ENCODE measurements at regions of chr18 and their contacts with region 1.

Region 1: DNA sequence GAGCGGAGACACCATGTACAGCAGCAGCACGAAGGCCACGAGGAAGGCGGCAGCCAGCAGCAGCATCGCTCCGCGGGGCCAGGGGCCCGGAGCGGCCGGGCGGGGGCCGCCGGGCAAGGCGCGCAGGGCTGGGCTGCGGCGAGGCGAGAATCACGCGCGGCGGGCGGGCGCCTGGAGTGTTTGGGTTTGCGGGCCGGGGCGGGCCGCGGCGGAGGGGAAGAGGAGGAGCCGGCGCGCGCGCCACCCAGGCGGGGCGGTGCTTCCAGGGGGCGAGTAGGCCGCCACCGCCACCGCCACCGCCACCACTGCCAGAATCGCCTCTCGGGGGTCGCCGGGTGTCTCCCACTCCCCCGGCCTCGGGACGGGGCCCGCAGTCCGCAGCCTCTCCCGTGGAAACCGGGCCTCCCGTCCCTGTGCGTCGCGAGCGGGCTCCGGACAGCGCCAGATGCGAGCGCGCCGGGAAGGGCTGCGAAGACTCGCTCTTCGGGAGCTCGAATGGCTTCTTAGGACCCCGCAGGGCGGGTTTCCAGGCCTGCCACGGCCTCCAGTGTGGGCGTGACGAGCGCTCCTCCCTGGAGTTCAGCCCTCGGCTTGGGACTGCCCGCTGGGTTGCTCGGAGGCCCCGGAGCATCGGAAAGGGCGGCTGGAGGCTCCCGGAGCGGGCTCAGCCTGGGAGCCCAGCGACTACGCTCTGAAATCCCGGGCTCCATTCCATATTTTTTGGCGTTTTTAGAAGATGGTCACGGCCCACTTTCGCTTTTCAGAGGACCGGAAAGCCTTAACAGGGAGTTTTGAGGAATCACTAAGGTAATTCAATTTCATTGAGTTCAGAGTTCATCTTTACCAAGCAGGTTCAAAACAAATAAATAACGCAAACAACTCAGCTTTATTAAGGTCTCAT is at the start of gene KDSR:
- DNase-seq: peak; percentile 98
- H3K4me3 Mint-ChIP-seq: peak within 1 kb of the TSS; percentile 97
- H3K27ac Mint-ChIP-seq: peak within 1 kb of the TSS; percentile 78
- H3K4me1 Mint-ChIP-seq: peaks cover 24% of the 10 kb centered on the region
- H3K27me3 Mint-ChIP-seq: no peaks in the 10 kb centered on the region
- CTCF ChIP-seq: no peak
- total RNA-seq, gene KDSR: 97.4 and 108 TPM in 2 replicates

Region 2: DNA sequence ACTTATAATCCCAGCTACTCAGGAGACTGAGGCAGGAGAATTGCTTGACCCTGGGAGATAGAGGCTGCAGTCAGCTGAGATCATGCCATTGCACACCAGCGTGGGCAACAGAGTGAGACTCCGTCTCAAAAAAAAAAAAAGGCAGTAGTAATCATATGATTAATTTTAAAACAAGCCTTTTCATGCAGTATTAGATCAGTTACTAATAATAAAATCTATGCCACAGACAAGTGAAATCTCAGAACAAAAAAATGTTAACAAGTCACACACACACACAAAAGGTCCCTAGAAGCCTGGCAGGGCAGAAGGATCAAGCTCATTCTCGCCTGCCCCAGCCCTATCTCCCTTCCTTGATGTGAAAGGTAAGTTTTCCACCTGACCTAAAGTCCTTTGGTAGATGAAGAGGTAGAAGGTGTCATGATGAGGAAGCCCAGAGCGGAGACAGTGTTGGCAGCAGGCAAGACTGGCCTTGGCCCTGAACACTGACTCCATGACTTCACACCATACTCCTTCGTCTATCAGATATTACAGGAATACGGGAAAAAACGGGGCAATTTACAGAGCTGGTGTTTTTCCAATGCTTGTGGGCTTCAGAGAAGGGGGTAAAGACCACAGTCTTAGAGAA is 10.9 kb before region 1 on chr18:
- CTCF ChIA-PET with region 1: interaction called, 3 read pairs
- POLR2A ChIA-PET with region 1: interaction called, 32 read pairs
- intact Hi-C with region 1: no loop called
- DNase-seq: no peak
- H3K4me3 Mint-ChIP-seq: no peak overlapping the region
- H3K27ac Mint-ChIP-seq: no peak overlapping the region
- H3K4me1 Mint-ChIP-seq: no peaks in the 10 kb centered on the region
- H3K27me3 Mint-ChIP-seq: no peaks in the 10 kb centered on the region
- CTCF ChIP-seq: no peak

Region 3: DNA sequence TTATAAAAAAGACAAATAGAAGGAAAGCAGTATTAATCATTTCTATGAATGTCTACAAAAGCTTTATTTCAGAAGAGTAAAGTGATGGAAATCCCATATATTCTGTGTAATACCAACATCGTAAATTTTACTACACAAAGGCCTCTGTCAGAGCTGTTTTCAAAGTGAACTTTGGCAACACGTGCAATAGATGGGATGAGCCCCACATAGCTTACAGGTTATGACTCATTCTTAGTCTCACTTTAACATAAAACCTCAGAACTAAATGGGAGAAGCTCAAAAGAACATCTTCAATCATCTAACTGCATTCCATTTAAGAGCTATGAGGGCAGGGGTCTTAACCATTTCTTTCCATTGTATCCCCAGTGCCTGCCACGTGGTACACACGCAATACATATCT is 43.5 kb after region 1 on chr18:
- CTCF ChIA-PET with region 1: no interaction called
- POLR2A ChIA-PET with region 1: interaction called, 29 read pairs
- intact Hi-C with region 1: no loop called
- DNase-seq: peak; percentile 74
- H3K4me3 Mint-ChIP-seq: no peak overlapping the region
- H3K27ac Mint-ChIP-seq: peak overlapping the region; percentile 57
- H3K4me1 Mint-ChIP-seq: peaks cover 25% of the 10 kb centered on the region
- H3K27me3 Mint-ChIP-seq: no peaks in the 10 kb centered on the region
- CTCF ChIP-seq: no peak

Region 4: DNA sequence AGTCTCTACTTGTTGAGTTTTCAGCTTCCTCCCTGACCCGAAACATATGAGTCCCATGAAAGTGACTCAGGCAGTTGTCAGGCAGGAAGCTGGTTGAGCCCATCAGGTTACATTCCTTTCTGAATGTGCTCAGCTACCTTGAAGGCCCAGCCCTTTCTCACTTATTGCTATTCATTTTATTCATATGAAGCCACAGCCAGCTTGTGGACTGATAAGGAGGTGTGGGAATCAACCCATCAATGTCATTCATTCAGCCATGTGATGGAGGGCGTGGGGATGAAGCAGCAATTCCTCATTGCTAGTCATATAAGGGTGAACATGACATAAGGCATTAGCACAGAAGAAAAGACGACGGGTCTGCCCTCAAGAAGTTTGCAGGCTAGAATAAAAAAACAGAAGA is 60.3 kb after region 1 on chr18:
- CTCF ChIA-PET with region 1: interaction called, 4 read pairs
- POLR2A ChIA-PET with region 1: interaction called, 51 read pairs
- intact Hi-C with region 1: loop called (anchors 1 kb)
- DNase-seq: peak; percentile 83
- H3K4me3 Mint-ChIP-seq: no peak overlapping the region
- H3K27ac Mint-ChIP-seq: peak overlapping the region; percentile 77
- H3K4me1 Mint-ChIP-seq: peaks cover 16% of the 10 kb centered on the region
- H3K27me3 Mint-ChIP-seq: no peaks in the 10 kb centered on the region
- CTCF ChIP-seq: no peak

Region 5: GRCh38 chr18:63476666-63477065 is 109.4 kb after region 1 on chr18 and contains the start of gene SERPINB5:
- CTCF ChIA-PET with region 1: interaction called, 3 read pairs
- POLR2A ChIA-PET with region 1: interaction called, 43 read pairs
- intact Hi-C with region 1: loop called (anchors 2 kb)
- DNase-seq: peak; percentile 99
- H3K4me3 Mint-ChIP-seq: peak within 1 kb of the TSS; percentile 95
- H3K27ac Mint-ChIP-seq: peak within 1 kb of the TSS; percentile 99
- H3K4me1 Mint-ChIP-seq: peaks cover 34% of the 10 kb centered on the region
- H3K27me3 Mint-ChIP-seq: no peaks in the 10 kb centered on the region
- CTCF ChIP-seq: no peak
- total RNA-seq, gene SERPINB5: 254 and 330 TPM in 2 replicates